ENCODE measurements at regions of chr3 and their contacts with region 1.

Region 1: GRCh38 chr3:134373994-134374790 is at the start of gene AMOTL2:
- DNase-seq: peak; percentile 89
- H3K4me3 ChIP-seq: peak within 1 kb of the TSS; percentile 69 to 73
- H3K27ac ChIP-seq: peak within 1 kb of the TSS; percentile 97 to 99
- H3K4me1 ChIP-seq: peaks cover 21% of the 10 kb centered on the region
- H3K27me3 ChIP-seq: no peaks in the 10 kb centered on the region
- CTCF ChIP-seq: no peak
- POLR2A ChIP-seq: peak; percentile 78
- total RNA-seq, gene AMOTL2: 86.1 to 92.8 TPM

Region 2: DNA sequence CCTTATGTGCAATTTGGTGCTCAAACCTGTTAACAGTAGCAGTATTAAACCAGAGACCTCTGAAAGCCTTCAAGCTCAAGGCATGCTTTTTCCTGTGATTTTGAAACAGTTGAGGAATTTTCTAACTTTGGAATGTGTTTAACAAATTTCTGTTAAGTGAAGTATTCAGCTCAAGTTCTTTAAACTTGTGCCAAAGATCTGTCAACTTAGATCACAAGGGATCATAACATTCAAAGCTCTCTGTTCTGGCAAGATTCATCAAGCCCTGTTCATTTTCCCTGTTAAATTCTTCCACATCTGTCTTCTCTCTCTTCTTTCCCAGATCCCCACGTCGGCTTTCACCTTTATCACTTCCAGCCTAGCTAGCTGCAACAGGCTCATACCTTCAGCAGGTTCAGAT is 94.7 kb before region 1 on chr3:
- intact Hi-C with region 1: no loop called
- DNase-seq: no peak
- H3K4me3 ChIP-seq: no peak overlapping the region
- H3K27ac ChIP-seq: no peak overlapping the region
- H3K4me1 ChIP-seq: no peaks in the 10 kb centered on the region
- H3K27me3 ChIP-seq: no peaks in the 10 kb centered on the region
- CTCF ChIP-seq: no peak
- POLR2A ChIP-seq: no peak

Region 3: GRCh38 chr3:134473868-134474546 is 99.8 kb after region 1 on chr3:
- intact Hi-C with region 1: loop called (anchors 5 kb)
- DNase-seq: peak; percentile 86
- H3K4me3 ChIP-seq: no peak overlapping the region
- H3K27ac ChIP-seq: no peak overlapping the region
- H3K4me1 ChIP-seq: no peaks in the 10 kb centered on the region
- H3K27me3 ChIP-seq: no peaks in the 10 kb centered on the region
- CTCF ChIP-seq: peak; percentile 46 to 93 (median 90)
- POLR2A ChIP-seq: no peak

Measured in prostate gland (tissue), 2 donors.